HEK293 (cell line): ENCODE measurements at regions of chr2 and their contacts with region 1.

Region 1: GRCh38 chr2:219171231-219171651 is 1.4 kb upstream of the SLC23A3 start:
- H3K4me3 ChIP-seq: no peak overlapping the region
- H3K27ac ChIP-seq: no peak overlapping the region
- H3K4me1 ChIP-seq: 0 out of 2 replicates have a peak, but pooled peaks cover 4% of the 10 kb centered on the region
- CTCF ChIP-seq: peak; percentile 28; the same call in 1 of the 2 replicates

Region 2: GRCh38 chr2:219335373-219335786 is 164.1 kb after region 1 on chr2:
- CTCF ChIA-PET with region 1: interaction called, 12 read pairs
- POLR2A ChIA-PET with region 1: no interaction called
- H3K4me3 ChIP-seq: no peak overlapping the region
- H3K27ac ChIP-seq: no peak overlapping the region
- H3K4me1 ChIP-seq: no peaks in the 10 kb centered on the region
- CTCF ChIP-seq: no peak

Region 3: GRCh38 chr2:219851801-219852481 is 680.7 kb after region 1 on chr2:
- CTCF ChIA-PET with region 1: no interaction called
- POLR2A ChIA-PET with region 1: no interaction called
- H3K4me3 ChIP-seq: no peak overlapping the region
- H3K27ac ChIP-seq: no peak overlapping the region
- H3K4me1 ChIP-seq: no peaks in the 10 kb centered on the region
- CTCF ChIP-seq: no peak